ENCODE measurements at regions of chr1 and their contacts with region 1.

Region 1: DNA sequence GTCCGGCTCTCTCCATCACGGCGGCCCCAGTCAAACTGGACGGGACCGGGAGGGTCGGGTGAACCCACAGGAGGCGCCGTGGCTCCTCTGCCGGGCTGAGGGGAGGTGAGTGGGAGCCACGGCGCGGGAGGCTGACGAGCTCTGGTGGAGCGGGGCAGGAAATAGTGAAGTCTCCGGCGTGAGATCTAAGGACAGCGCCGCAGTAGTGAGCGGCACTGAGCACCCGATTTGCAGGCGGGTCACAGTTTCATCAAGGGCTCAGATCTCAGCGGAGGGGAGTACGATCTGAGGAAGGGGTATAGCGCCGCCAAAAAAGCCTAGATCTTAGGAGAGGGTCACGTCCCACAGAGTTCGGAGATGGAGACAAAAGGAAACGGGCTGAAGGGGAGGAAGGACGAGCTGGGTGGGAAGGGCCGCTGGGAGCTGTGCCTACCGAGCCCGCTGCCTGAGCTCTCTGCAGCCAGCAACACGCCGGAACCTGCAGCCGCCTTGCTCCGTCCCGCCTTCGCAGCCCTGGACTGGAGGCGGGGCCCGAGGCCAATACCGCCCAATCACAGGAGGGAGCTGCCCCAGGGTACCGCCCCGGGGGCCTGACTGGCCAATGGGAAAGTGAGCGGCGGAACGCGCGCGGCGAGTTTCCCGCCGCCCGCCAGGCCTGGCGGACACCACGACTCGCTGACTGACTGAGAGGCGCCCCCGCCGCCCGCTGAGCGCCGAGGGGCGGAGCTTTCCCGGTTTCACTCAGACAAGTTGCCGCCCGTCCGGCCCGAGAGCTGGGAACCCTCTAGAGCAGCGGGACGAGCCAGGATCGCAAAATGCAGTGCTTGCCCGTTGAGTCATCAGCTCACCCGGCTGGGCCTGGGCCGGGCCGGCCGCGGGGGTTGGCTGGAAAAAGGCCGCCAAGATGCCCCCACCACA is 1.9 kb downstream of the SFN start:
- DNase-seq: peak; percentile 97
- H3K4me3 Mint-ChIP-seq: peak overlapping the region; percentile 98
- H3K27ac Mint-ChIP-seq: peak overlapping the region; percentile 94
- H3K4me1 Mint-ChIP-seq: peaks cover 29% of the 10 kb centered on the region
- H3K27me3 Mint-ChIP-seq: no peaks in the 10 kb centered on the region

Region 2: GRCh38 chr1:26417111-26417759 is 447.6 kb before region 1 on chr1:
- CTCF ChIA-PET with region 1: no interaction called
- POLR2A ChIA-PET with region 1: no interaction called
- intact Hi-C with region 1: no loop called
- DNase-seq: peak; percentile 89
- H3K4me3 Mint-ChIP-seq: no peak overlapping the region
- H3K27ac Mint-ChIP-seq: no peak overlapping the region
- H3K4me1 Mint-ChIP-seq: peaks cover 2% of the 10 kb centered on the region
- H3K27me3 Mint-ChIP-seq: peaks cover 15% of the 10 kb centered on the region

Region 3: GRCh38 chr1:26472901-26473845 is 391.7 kb before region 1 on chr1:
- CTCF ChIA-PET with region 1: no interaction called
- POLR2A ChIA-PET with region 1: interaction called, 3 read pairs
- intact Hi-C with region 1: loop called (anchors 2 kb)
- DNase-seq: peak; percentile 97
- H3K4me3 Mint-ChIP-seq: peak overlapping the region; percentile 89
- H3K27ac Mint-ChIP-seq: peak overlapping the region; percentile 74
- H3K4me1 Mint-ChIP-seq: peaks cover 50% of the 10 kb centered on the region
- H3K27me3 Mint-ChIP-seq: no peaks in the 10 kb centered on the region

Region 4: DNA sequence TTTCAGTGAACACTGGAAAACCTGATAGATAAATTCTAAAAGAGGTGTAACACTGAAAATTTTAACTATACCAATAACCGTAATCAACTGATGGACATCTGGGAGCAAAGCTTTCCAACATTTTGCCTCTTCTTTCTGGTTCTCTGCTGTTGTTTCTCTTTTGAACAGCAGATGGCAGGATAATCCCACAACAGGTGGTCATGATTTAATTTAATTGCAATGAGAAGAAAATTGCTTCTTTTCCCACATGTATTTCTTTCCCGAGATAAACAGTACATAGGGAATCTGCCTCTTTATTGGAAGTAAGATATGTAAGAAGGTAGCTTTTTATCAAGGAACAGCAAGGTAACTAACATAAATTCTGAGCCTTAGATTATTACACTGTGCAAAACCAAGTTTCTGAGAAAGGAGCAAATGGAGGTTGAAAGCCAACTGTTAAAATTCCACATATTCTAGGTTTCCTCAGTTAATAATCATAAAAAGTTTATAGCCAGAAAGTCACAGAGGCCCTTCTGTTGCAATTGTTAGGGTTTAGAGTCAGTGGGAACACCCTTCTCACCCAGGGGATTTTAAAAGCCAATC is 262.4 kb before region 1 on chr1:
- CTCF ChIA-PET with region 1: interaction called, 11 read pairs
- POLR2A ChIA-PET with region 1: no interaction called
- intact Hi-C with region 1: no loop called
- DNase-seq: no peak
- H3K4me3 Mint-ChIP-seq: no peak overlapping the region
- H3K27ac Mint-ChIP-seq: no peak overlapping the region
- H3K4me1 Mint-ChIP-seq: peaks cover 7% of the 10 kb centered on the region
- H3K27me3 Mint-ChIP-seq: no peaks in the 10 kb centered on the region

Region 5: GRCh38 chr1:26826261-26827105 is 38.4 kb before region 1 on chr1 and contains the start of gene ZDHHC18:
- CTCF ChIA-PET with region 1: interaction called, 6 read pairs
- POLR2A ChIA-PET with region 1: interaction called, 4 read pairs
- intact Hi-C with region 1: loop called (anchors 1 kb)
- DNase-seq: peak; percentile 79
- H3K4me3 Mint-ChIP-seq: peak within 1 kb of the TSS; percentile 94
- H3K27ac Mint-ChIP-seq: peak within 1 kb of the TSS; percentile 96
- H3K4me1 Mint-ChIP-seq: peaks cover 41% of the 10 kb centered on the region
- H3K27me3 Mint-ChIP-seq: no peaks in the 10 kb centered on the region
- total RNA-seq, gene ZDHHC18: 60.2 to 63.5 TPM

Region 6: GRCh38 chr1:26877326-26877725 is 12.5 kb after region 1 on chr1:
- CTCF ChIA-PET with region 1: interaction called, 29 read pairs
- POLR2A ChIA-PET with region 1: interaction called, 3 read pairs
- intact Hi-C with region 1: no loop called
- DNase-seq: no peak
- H3K4me3 Mint-ChIP-seq: no peak overlapping the region
- H3K27ac Mint-ChIP-seq: no peak overlapping the region
- H3K4me1 Mint-ChIP-seq: no peaks in the 10 kb centered on the region
- H3K27me3 Mint-ChIP-seq: no peaks in the 10 kb centered on the region

Region 7: DNA sequence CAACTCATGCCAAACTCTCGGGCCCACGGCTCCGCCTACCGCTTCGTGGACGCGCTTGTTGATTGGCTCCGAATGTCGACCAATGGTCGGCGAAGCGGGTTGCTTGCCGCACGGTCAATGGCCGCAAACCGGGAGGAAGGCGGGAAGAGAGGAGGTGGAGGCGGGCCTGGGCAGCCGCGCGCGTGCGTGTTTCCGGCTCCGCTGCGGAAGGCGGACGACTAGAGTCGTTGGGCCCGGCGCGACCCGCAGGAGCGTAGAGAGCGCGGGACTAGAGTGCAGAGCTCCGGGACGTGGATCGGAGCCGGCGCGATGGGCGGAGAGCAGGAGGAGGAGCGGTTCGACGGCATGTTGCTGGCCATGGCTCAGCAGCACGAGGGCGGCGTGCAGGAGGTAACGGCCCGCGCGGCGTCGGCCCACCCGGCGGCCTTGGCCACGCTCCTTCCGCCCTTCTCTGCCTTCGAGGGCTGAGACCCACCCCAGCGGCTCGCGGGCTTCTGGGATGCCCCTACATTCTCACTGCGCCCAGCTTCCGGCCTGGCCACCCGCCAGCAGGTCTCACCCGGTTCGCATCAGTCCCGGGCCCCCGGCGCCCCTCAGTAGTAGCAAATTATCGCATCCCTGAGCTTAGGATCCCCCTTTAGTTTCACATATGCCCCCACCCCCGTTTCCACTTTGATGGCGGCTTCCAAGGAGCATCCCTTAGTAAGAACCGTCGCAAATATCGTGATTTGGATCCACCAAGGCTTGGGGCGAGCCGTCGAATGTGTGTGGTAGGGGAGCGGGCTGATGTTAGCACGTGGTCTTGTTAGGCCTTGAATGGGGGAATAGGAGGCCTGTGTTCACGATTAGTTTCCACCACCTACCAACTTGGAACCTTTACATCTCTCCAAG is 56.9 kb after region 1 on chr1 and contains the start of gene NUDC:
- CTCF ChIA-PET with region 1: interaction called, 3 read pairs
- POLR2A ChIA-PET with region 1: interaction called, 3 read pairs
- intact Hi-C with region 1: loop called (anchors 2 kb)
- DNase-seq: peak; percentile 98
- H3K4me3 Mint-ChIP-seq: peak within 1 kb of the TSS; percentile 98
- H3K27ac Mint-ChIP-seq: peak within 1 kb of the TSS; percentile 93
- H3K4me1 Mint-ChIP-seq: peaks cover 36% of the 10 kb centered on the region
- H3K27me3 Mint-ChIP-seq: no peaks in the 10 kb centered on the region
- total RNA-seq, gene NUDC: 90.8 to 97.1 TPM

Region 8: DNA sequence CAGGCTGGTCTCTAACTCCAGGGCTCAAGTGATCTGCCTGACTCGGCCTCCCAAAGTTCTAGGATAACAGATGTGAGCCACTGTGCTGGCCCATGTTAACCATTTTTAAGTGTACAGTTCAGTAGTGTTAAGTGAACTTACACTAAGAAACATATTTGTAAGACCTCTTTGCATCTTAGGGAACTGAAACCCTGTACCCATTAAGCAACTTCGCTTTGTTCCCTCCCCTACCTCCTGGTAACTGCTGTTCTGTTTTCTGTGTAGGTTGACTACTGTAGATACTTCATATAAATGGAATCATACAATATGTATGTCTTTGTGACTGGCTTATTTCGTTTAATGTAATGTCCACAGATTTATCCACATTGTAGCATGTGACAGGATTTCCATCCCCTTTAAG is 67.7 kb after region 1 on chr1:
- CTCF ChIA-PET with region 1: no interaction called
- POLR2A ChIA-PET with region 1: no interaction called
- intact Hi-C with region 1: no loop called
- DNase-seq: no peak
- H3K4me3 Mint-ChIP-seq: no peak overlapping the region
- H3K27ac Mint-ChIP-seq: no peak overlapping the region
- H3K4me1 Mint-ChIP-seq: peaks cover 2% of the 10 kb centered on the region
- H3K27me3 Mint-ChIP-seq: no peaks in the 10 kb centered on the region

Measured in activated CD4-positive, alpha-beta memory T cell treated with anti-CD3 and anti-CD28 coated beads for 36 hours (primary cell).